AG04449 (cell line): ENCODE measurements at regions of chr1 and their contacts with region 1.

Region 1: DNA sequence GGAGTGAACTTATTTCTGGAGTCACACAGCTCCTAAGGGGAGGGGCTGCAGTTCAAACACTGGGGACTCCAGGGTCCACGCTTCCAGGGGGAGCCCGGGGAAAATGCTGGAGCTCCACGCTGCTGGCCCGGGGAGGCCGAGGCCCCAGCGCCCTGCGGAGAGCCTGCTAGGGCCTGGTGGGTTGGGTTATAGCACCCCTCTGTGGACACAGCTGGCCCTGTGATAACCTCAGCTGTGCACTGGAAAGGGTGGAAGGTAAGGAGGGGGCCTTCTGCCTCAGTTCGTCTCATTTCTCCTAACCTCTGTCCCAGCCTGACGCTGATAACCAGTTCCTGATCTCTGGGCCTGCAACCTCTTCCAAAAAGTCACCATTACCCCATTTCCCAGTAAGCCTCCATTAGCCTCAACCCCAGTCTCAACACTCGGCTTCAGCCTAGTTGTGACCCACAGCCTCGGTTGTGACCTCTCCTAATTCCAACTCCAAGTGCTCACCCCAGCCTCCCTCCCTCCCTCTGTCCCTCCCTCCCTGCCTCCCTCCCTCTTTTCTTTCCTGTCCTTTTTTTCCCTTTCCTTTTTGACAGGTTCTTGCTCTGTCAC is 7.1 kb downstream of the NBL1 start:
- DNase-seq: no peak
- H3K4me3 ChIP-seq: no peak overlapping the region
- CTCF ChIP-seq: peak; percentile 86

Region 2: DNA sequence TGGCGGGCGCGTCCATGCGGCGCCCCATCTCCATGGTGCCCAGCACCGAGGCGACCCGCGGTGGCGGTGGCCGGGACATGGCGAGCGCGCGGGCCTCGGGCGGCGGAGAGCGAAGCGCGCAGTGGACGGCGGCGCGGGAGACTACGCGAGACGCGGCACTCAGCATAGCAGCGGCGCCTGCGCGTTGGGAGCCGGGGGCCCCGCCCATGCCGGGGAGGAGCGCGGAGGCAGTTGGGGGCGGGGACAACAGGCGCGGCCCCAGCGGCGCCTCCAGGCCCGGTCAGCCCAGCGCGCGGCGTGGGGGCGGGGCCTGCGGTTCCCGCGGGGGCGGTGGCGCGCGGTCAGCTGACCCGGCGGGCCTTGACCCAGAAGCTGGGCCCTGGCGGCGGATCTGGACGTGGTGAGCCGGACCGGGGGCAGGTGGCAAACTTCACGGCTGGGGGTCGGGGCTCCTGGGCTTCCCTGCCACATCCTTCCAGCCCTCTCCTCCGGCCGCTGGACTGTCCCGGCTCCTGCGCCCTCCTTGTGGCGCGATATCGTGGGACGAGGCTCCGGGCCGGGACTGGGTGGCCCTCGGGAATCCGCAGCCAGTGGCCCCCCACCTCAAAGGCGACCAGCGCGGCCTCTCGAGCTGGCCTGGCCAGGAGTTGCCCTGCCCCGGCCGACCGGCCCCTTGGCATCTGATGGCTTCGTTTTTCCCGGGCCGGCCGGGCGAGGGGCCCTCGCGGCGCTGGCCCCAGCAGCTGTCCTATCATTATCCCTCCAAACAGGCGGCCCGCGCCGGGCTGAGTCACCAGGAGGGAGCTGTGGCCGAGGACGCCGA is 339.1 kb before region 1 on chr1 and contains the starts of genes AKR7A2 and SLC66A1:
- CTCF ChIA-PET with region 1: interaction called, 16 read pairs
- POLR2A ChIA-PET with region 1: no interaction called
- DNase-seq: no peak
- H3K4me3 ChIP-seq: peak within 1 kb of the TSS; percentile 83
- CTCF ChIP-seq: no peak

Region 3: GRCh38 chr1:19361611-19362147 is 289.6 kb before region 1 on chr1:
- CTCF ChIA-PET with region 1: interaction called, 12 read pairs
- POLR2A ChIA-PET with region 1: no interaction called
- DNase-seq: no peak
- H3K4me3 ChIP-seq: no peak overlapping the region
- CTCF ChIP-seq: no peak

Region 4: DNA sequence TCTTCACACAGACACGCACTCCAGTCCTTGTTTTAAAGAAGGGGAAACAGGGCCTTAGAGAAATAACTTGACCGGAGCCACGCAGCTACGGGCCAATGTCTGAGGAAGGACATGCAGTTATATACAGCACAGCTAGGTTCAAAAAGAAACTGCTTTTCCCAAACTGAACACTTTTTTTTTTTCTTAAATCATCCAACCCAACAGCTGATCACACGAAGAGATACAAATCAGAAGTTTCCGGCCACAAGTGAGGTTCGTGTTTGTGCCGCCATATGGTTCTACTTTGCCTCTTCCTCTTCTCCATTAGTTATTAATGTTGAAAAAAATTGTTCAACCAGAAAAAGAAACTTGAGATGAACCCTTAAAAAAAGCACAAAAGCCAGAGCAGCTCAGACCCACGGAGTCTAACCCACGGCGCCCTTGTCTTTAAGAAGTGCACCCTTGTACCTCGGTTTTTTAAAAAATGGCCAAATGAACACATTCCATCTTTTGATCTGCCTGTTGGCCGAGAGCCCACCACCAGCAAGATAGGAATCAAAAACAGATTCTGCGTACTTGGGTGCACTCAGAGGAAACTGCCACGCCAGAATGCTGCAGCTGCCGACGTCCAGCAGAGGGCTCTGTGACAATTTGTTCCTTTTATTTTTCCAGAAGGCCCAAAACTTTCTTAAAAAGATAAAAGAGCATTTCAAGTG is 260.2 kb before region 1 on chr1:
- CTCF ChIA-PET with region 1: interaction called, 21 read pairs
- POLR2A ChIA-PET with region 1: no interaction called
- DNase-seq: peak; percentile 59
- H3K4me3 ChIP-seq: peak overlapping the region; percentile 41
- CTCF ChIP-seq: peak; percentile 83

Region 5: DNA sequence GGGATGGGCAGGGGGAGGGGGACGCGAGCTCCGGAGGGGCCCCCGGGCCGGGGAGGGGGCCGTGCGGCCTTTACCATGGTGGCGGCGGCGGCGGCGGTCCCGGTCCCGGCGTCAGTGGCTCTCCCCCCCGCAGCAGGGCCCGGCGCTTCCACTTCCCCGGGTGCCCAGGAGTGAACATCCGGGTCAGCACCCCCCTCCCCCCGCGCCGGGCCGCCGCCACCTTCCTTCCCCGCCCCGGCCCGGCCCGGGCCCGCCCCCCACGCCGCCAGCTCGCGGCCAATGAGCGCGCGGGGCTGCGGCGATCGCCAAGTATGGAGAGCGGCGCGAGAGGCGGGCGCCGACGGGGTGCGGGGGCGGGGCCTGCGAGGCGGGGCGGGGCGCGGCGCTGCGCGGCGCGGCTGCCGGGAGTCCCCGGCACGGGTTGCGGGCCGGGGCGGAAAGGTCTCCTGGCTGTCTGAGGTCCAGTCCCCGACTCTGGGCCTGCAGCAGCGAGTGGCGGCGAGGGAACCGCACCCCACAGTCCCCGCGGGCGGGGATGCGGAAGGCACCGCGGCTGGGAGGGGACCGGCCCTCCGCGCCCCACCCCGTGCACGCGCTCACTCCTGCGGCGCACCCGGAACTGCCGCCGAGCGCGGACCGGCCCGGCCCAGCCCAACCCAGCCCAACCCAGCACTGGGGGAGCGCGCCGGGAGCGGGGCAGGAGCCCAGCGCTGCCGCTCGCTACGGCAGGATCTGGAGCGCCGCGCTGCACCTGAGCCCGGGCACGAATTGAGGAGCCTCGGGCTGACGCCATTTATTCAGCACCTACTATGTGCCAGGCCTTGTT is 165.7 kb before region 1 on chr1 and contains the start of gene CAPZB:
- CTCF ChIA-PET with region 1: interaction called, 36 read pairs
- POLR2A ChIA-PET with region 1: interaction called, 3 read pairs
- DNase-seq: no peak
- H3K4me3 ChIP-seq: peak within 1 kb of the TSS; percentile 84
- CTCF ChIP-seq: no peak

Region 6: GRCh38 chr1:19668893-19669292 is 17.7 kb after region 1 on chr1:
- CTCF ChIA-PET with region 1: interaction called, 67 read pairs
- POLR2A ChIA-PET with region 1: no interaction called
- DNase-seq: no peak
- H3K4me3 ChIP-seq: no peak overlapping the region
- CTCF ChIP-seq: no peak